Activated CD8-positive, alpha-beta T cell treated with anti-CD3 and anti-CD28 coated beads for 36 hours (primary cell): ENCODE measurements at regions of chr19 and their contacts with region 1.

Region 1: GRCh38 chr19:28324275-28325060 is 888.5 kb downstream of the UQCRFS1 start:
- DNase-seq: no peak
- ATAC-seq: no peak
- H3K4me3 Mint-ChIP-seq: no peak overlapping the region
- H3K27ac Mint-ChIP-seq: no peak overlapping the region
- H3K4me1 Mint-ChIP-seq: no peaks in the 10 kb centered on the region
- H3K27me3 Mint-ChIP-seq: no peaks in the 10 kb centered on the region
- CTCF ChIP-seq: no peak

Region 2: GRCh38 chr19:27974082-27974513 is 350.4 kb before region 1 on chr19:
- CTCF ChIA-PET with region 1: interaction called, 9 read pairs
- POLR2A ChIA-PET with region 1: no interaction called
- intact Hi-C with region 1: loop called (anchors 5 kb)
- DNase-seq: peak; percentile 20
- ATAC-seq: no peak
- H3K4me3 Mint-ChIP-seq: no peak overlapping the region
- H3K27ac Mint-ChIP-seq: no peak overlapping the region
- H3K4me1 Mint-ChIP-seq: no peaks in the 10 kb centered on the region
- H3K27me3 Mint-ChIP-seq: peaks cover 3% of the 10 kb centered on the region
- CTCF ChIP-seq: peak; percentile 42

Region 3: DNA sequence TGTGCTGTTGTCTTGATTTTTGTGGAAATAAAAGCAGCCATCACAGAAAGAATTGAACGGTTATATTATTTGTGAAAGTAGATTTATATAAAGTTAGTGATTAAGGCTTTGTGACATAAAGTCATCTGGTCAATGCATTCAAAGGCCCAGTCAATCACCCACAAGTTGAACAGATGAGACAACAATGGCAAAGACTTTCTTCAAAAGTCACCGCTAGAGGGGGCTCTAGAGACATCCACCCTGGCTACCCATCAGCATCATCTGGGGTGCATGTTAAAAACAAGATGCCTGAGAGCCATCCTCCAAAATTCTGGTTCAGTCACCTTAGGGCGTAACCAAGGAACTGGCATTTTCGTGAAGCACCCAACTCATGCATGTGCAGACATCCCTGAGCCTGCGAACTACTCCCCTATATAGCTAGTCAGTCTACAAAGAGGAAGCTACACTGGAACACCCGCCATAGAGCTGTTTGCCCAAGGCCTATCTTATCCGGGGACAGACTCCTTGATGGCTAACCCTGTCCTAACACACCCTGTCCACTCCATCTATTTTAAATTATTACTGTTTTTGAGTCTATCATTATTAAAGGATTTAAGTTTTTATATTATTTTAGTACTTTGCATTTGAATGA is 82.1 kb before region 1 on chr19:
- CTCF ChIA-PET with region 1: interaction called, 3 read pairs
- POLR2A ChIA-PET with region 1: no interaction called
- intact Hi-C with region 1: loop called (anchors 5 kb)
- DNase-seq: peak; percentile 38
- ATAC-seq: no peak
- H3K4me3 Mint-ChIP-seq: no peak overlapping the region
- H3K27ac Mint-ChIP-seq: no peak overlapping the region
- H3K4me1 Mint-ChIP-seq: no peaks in the 10 kb centered on the region
- H3K27me3 Mint-ChIP-seq: no peaks in the 10 kb centered on the region
- CTCF ChIP-seq: peak; percentile 52